Aorta (tissue), 5 donors: ENCODE measurements at regions of chr4 and their contacts with region 1.

Region 1: GRCh38 chr4:111136438-111136837 is 513.6 kb upstream of the PITX2 start:
- DNase-seq: no peak
- ATAC-seq: no peak
- H3K4me3 ChIP-seq: peak overlapping the region in 1 of 2 donors; percentile 8
- H3K27ac ChIP-seq: no peak overlapping the region
- H3K4me1 ChIP-seq: no peaks in the 10 kb centered on the region
- H3K27me3 ChIP-seq: no peaks in the 10 kb centered on the region

Region 2: GRCh38 chr4:111108153-111108552 is 28.3 kb before region 1 on chr4:
- intact Hi-C with region 1: no loop called
- DNase-seq: no peak
- ATAC-seq: no peak
- H3K4me3 ChIP-seq: no peak overlapping the region
- H3K27ac ChIP-seq: no peak overlapping the region
- H3K4me1 ChIP-seq: no peaks in the 10 kb centered on the region
- H3K27me3 ChIP-seq: no peaks in the 10 kb centered on the region

Region 3: DNA sequence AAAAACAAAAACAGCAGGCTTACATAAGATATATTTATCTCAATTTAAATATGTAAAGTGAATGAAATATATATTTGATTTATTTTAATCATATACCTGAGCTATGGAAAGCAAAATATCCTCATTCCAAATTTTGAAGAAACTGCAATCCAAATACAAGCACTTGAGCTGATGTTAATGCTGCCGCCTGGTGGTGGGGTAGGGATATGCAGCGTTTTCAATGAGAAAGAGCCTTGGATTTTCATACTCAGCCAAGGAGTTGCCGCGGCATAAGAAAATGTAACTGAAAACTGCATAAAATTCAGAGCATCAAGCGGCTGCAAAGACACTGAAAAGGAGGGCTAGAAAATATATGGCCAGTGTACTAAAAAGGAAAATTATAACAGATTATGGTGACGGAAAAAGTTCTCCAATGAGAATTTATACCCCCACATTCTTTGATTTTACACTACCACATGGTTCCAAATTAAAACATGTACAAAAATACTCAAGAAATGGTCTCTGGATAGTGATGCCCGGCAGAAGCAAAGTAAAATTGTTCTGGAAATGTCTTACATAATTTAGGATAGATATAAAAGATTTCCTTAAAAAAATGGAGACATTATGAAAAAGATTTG is 146.7 kb after region 1 on chr4:
- intact Hi-C with region 1: loop called in 1 of 2 experiments (anchors 5 kb)
- DNase-seq: peak; percentile 49 to 78
- ATAC-seq: no peak
- H3K4me3 ChIP-seq: no peak overlapping the region
- H3K27ac ChIP-seq: no peak overlapping the region
- H3K4me1 ChIP-seq: no peaks in the 10 kb centered on the region
- H3K27me3 ChIP-seq: no peaks in the 10 kb centered on the region

Region 4: DNA sequence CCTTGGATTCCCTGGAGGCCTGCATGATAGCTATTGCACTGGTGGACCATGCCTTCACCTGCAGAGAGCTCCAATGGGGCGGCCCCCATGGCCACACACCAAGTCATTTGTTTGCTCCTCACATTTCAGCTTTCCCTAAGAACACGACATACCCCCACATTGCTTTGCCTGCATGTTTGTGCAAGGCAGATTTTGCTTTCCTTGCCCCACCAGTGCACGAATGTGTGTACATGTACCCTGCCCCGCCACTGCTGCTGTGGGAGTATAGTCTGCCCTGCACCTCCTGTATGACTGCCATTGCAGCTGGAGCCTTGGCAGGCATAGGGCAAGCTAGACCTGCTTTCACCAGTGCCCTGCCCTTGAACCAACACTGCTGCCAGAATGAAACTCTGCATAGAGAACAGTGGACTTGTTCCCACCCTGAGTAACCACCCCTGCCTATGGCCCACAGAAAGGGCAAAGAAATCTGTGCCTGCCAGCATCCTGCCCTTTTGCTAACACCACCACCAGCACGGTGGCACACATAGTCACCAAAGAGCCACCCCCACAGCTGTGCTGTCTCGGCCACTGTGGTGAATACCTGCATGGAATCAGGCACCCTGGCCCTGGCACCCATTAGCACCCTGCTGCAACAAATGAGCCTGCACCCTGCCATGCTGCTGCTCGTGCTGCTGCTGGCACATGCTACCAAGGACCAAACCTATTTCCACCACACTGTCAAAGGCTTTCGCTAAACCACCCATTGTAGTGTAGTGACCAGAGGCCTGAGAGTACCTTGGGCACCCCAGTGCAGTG is 347.1 kb after region 1 on chr4:
- intact Hi-C with region 1: loop called in 1 of 2 experiments (anchors 10 kb)
- DNase-seq: peak in 1 of 2 donors; percentile 49
- ATAC-seq: no peak
- H3K4me3 ChIP-seq: no peak overlapping the region
- H3K27ac ChIP-seq: no peak overlapping the region
- H3K4me1 ChIP-seq: no peaks in the 10 kb centered on the region
- H3K27me3 ChIP-seq: no peaks in the 10 kb centered on the region